CD4-positive, alpha-beta T cell (primary cell): ENCODE measurements at regions of chr1 and their contacts with region 1.

Region 1: DNA sequence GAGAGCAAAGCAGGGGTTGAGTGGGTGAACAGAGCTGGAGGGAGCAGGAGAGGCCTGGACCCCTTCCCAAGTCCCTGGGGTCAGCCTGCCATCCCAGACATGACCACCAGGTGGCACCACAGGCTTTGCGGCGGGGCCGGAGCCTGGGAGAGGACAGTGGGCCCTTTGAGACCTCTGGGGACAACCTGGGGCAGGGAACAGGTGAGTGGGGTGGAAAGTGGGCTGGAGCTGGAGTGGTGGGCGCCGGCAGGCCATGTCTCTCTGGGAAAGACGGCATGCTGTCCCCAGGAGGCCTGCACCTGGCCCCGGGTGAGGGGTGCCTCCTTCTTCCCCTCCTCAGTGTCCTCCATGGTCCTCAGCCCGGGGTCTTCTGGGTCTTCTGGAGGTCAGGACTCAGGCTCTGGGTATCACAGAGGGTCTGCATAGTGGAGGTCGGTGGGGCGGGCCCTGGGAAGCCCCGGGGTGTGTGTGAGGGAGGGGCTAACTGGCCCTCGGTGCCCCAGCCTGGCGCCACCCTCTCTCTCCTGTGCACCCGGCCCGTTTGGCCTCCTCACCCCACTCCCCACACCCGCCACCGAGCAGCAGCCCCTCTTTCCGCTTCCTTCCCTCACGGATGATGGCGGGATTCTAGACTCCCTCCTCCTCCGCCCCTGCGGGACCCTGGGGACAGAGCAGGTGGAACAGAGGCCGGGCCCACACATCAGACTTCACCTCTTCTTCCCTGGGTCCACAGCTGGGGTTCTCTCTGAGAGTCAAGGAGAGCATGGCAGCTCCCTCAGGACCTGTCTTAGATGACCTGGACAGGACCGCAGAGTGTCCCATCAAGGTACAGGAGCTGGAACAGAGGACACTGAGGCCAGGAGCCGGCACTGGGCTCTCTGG is 28.4 kb upstream of the PKP1 start:
- DNase-seq: peak; percentile 32 to 72 (median 51)
- ATAC-seq: peak; percentile 59
- H3K4me3 ChIP-seq: no peak overlapping the region
- H3K4me3 Mint-ChIP-seq: no peak overlapping the region
- H3K27ac ChIP-seq: no peak overlapping the region
- H3K27ac Mint-ChIP-seq: no peak overlapping the region
- H3K4me1 ChIP-seq: peaks cover 10% of the 10 kb centered on the region
- H3K4me1 Mint-ChIP-seq: no peaks in the 10 kb centered on the region
- H3K27me3 ChIP-seq: peaks cover 2 to 3% of the 10 kb centered on the region in 2 experiments
- H3K27me3 Mint-ChIP-seq: peaks cover 6% of the 10 kb centered on the region
- CTCF ChIP-seq: peak; percentile 78

Region 2: GRCh38 chr1:201295861-201296260 is 41.0 kb after region 1 on chr1:
- CTCF ChIA-PET with region 1: no interaction called
- POLR2A ChIA-PET with region 1: no interaction called
- intact Hi-C with region 1: no loop called
- DNase-seq: no peak
- ATAC-seq: no peak
- H3K4me3 ChIP-seq: no peak overlapping the region
- H3K4me3 Mint-ChIP-seq: no peak overlapping the region
- H3K27ac ChIP-seq: no peak overlapping the region
- H3K27ac Mint-ChIP-seq: no peak overlapping the region
- H3K4me1 ChIP-seq: no peaks in the 10 kb centered on the region
- H3K4me1 Mint-ChIP-seq: no peaks in the 10 kb centered on the region
- H3K27me3 ChIP-seq: peaks cover 7 to 18% of the 10 kb centered on the region in 2 experiments
- H3K27me3 Mint-ChIP-seq: peaks cover 35% of the 10 kb centered on the region
- CTCF ChIP-seq: no peak

Region 3: GRCh38 chr1:201408176-201408833 is 153.4 kb after region 1 on chr1:
- CTCF ChIA-PET with region 1: no interaction called
- POLR2A ChIA-PET with region 1: no interaction called
- intact Hi-C with region 1: loop called in 1 of 2 experiments (anchors 1 kb)
- DNase-seq: peak; percentile 42 to 76 (median 57)
- ATAC-seq: peak; percentile 48
- H3K4me3 ChIP-seq: no peak overlapping the region
- H3K4me3 Mint-ChIP-seq: no peak overlapping the region
- H3K27ac ChIP-seq: no peak overlapping the region
- H3K27ac Mint-ChIP-seq: no peak overlapping the region
- H3K4me1 ChIP-seq: no peaks in the 10 kb centered on the region
- H3K4me1 Mint-ChIP-seq: no peaks in the 10 kb centered on the region
- H3K27me3 ChIP-seq: peaks cover 0 to 4% of the 10 kb centered on the region in 2 experiments
- H3K27me3 Mint-ChIP-seq: peaks cover 4% of the 10 kb centered on the region
- CTCF ChIP-seq: peak; percentile 81